B cell (primary cell): ENCODE measurements at regions of chr10 and their contacts with region 1.

Region 1: GRCh38 chr10:100046021-100046486 is 35.6 kb downstream of the CPN1 start:
- DNase-seq: peak; percentile 83
- ATAC-seq: peak; percentile 70
- H3K4me3 ChIP-seq: no peak overlapping the region
- H3K4me3 Mint-ChIP-seq: no peak overlapping the region
- H3K27ac ChIP-seq: no peak overlapping the region
- H3K27ac Mint-ChIP-seq: no peak overlapping the region
- H3K4me1 ChIP-seq: peaks cover 0 to 4% of the 10 kb centered on the region in 2 donors
- H3K4me1 Mint-ChIP-seq: peaks cover 4% of the 10 kb centered on the region
- H3K27me3 ChIP-seq: no peaks in the 10 kb centered on the region
- H3K27me3 Mint-ChIP-seq: no peaks in the 10 kb centered on the region
- CTCF ChIP-seq: peak; percentile 97

Region 2: DNA sequence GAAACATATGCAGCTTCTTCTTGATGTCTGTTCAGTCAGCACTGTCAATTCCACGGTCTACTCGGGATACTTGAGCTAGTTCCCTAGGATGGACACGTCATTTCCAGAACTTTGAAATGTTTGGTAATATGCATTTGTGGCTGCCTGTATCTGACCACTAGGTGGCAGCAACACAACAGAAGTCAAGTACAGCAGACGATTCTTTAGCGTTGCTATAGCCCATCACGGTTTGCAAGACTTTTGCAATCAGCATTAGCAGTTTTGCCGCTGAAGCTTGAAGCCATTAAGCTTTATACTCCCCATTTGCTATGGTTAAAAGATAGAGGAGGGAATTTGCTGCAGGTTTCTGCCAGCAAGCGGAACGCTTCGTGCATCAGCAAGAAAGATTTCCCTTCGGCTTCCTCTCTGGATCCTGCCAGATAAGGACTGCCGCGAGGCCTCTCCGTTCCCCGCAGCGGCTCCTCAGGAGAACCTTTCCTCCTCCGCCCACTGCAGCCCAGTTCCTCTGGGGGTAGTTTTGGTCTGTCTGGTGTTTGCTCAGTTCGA is 200.1 kb before region 1 on chr10:
- CTCF ChIA-PET with region 1: interaction called, 525 read pairs
- POLR2A ChIA-PET with region 1: no interaction called
- intact Hi-C with region 1: no loop called
- DNase-seq: peak; percentile 85
- ATAC-seq: peak; percentile 84
- H3K4me3 ChIP-seq: peak overlapping the region in 4 of 5 experiments; percentile 10 to 61 (median 41)
- H3K4me3 Mint-ChIP-seq: peak overlapping the region; percentile 75
- H3K27ac ChIP-seq: no peak overlapping the region
- H3K27ac Mint-ChIP-seq: no peak overlapping the region
- H3K4me1 ChIP-seq: peaks cover 0 to 10% of the 10 kb centered on the region in 2 donors
- H3K4me1 Mint-ChIP-seq: peaks cover 7% of the 10 kb centered on the region
- H3K27me3 ChIP-seq: peaks cover 0 to 7% (median 0%) of the 10 kb centered on the region in 4 experiments
- H3K27me3 Mint-ChIP-seq: no peaks in the 10 kb centered on the region
- CTCF ChIP-seq: peak; percentile 93

Region 3: GRCh38 chr10:99854860-99855259 is 191.2 kb before region 1 on chr10:
- CTCF ChIA-PET with region 1: interaction called, 525 read pairs
- POLR2A ChIA-PET with region 1: no interaction called
- intact Hi-C with region 1: no loop called
- DNase-seq: no peak
- ATAC-seq: no peak
- H3K4me3 ChIP-seq: no peak overlapping the region
- H3K4me3 Mint-ChIP-seq: no peak overlapping the region
- H3K27ac ChIP-seq: no peak overlapping the region
- H3K27ac Mint-ChIP-seq: no peak overlapping the region
- H3K4me1 ChIP-seq: no peaks in the 10 kb centered on the region
- H3K4me1 Mint-ChIP-seq: no peaks in the 10 kb centered on the region
- H3K27me3 ChIP-seq: no peaks in the 10 kb centered on the region
- H3K27me3 Mint-ChIP-seq: no peaks in the 10 kb centered on the region
- CTCF ChIP-seq: no peak

Region 4: DNA sequence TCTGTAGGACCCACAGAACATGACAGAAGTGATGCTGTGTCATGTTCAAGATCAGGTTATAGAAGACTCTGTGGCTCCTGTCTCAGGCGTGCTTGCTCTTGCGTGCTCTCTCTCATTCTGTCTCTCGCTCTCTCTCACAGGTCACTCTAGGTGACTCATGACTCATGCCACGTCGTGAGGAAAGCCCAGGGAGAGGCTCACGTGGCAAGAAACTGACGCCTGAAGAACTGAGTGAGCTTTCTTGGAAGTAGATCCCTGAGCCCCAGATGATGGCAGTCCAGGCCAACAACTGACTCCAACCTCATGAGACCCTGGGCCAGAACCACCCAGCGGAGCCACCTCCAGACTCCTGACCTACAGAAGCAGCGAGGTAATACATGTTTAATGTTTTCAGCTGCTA is 139.6 kb before region 1 on chr10:
- CTCF ChIA-PET with region 1: interaction called, 15 read pairs
- POLR2A ChIA-PET with region 1: no interaction called
- intact Hi-C with region 1: no loop called
- DNase-seq: no peak
- ATAC-seq: no peak
- H3K4me3 ChIP-seq: no peak overlapping the region
- H3K4me3 Mint-ChIP-seq: no peak overlapping the region
- H3K27ac ChIP-seq: no peak overlapping the region
- H3K27ac Mint-ChIP-seq: no peak overlapping the region
- H3K4me1 ChIP-seq: no peaks in the 10 kb centered on the region
- H3K4me1 Mint-ChIP-seq: no peaks in the 10 kb centered on the region
- H3K27me3 ChIP-seq: no peaks in the 10 kb centered on the region
- H3K27me3 Mint-ChIP-seq: no peaks in the 10 kb centered on the region
- CTCF ChIP-seq: no peak

Region 5: DNA sequence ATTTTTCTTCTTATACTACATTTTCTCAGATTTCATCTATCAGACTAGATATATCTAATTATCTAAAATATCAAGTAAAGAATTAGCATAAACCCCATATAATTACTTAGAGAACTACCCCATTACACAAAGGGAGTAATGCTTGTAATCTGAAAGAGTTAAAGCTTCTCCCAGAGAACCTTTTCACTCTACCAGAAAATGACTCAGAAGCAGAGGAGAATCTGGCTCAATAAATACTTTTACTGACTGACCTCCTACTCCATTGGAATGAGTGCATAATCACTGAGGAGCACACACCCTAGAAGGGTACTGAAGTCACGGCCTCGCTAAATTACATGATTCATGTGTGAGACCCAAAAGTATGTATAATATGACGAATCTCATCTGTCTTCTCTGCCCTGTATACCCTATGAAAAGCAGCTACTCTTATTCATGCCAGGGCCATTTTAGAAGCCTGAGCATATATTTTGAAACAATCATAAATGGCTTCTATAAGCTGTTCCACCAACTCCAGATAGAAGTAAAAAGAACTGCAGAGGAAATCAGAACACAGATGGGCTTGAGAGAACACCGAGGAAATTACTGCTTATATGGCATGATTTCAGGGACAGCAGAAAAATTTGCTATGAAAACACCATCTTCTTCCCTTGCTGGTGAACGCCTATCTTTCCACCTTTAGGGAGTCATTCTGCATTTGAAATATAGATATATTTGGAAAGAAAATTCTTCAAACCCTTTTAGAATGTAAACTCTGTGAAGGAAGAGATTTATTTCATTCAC is 69.0 kb before region 1 on chr10:
- CTCF ChIA-PET with region 1: interaction called, 29 read pairs
- POLR2A ChIA-PET with region 1: interaction called, 5 read pairs
- intact Hi-C with region 1: loop called (anchors 2 kb)
- DNase-seq: no peak
- ATAC-seq: no peak
- H3K4me3 ChIP-seq: no peak overlapping the region
- H3K4me3 Mint-ChIP-seq: no peak overlapping the region
- H3K27ac ChIP-seq: peak overlapping the region in 1 of 2 donors; percentile 26
- H3K27ac Mint-ChIP-seq: no peak overlapping the region
- H3K4me1 ChIP-seq: peaks cover 60 to 65% of the 10 kb centered on the region in 2 donors
- H3K4me1 Mint-ChIP-seq: peaks cover 66% of the 10 kb centered on the region
- H3K27me3 ChIP-seq: no peaks in the 10 kb centered on the region
- H3K27me3 Mint-ChIP-seq: no peaks in the 10 kb centered on the region
- CTCF ChIP-seq: no peak

Region 6: DNA sequence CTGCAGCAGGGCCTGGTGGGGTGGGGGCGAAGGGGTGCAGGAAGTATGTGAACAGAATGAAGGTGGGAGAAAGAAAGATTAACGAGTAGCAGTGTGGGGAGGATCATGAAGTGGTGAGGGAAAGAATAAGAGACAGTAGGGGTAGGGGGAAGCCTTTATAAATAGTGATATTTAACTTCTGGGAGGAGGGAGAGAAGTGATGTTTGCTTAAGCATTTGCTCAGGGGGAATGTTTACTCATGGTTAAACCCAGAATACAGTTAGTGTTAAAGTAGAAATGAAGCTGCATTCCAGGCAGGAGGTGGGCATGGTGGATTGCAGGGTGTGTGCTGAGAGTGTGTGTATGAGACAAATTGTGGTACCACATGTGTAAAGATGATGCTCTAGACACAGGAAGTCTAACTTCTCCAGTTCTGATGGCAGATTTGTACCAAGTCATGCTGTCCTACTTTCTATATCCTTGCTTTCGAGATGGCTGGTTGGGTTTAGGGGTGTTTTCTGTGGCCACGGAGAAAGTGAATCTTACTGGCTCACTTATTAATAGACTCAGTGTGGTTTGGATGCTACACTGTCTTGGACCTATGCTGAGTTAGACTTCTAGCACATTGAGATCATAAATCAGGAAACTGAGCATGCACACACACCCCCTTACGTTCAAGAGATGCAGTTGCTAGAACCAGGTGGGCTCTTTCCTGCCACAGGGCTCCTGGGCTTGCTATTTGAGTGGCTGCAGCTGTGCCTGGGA is 25.7 kb before region 1 on chr10:
- CTCF ChIA-PET with region 1: interaction called, 25 read pairs
- POLR2A ChIA-PET with region 1: no interaction called
- intact Hi-C with region 1: no loop called
- DNase-seq: peak; percentile 49
- ATAC-seq: peak; percentile 66
- H3K4me3 ChIP-seq: no peak overlapping the region
- H3K4me3 Mint-ChIP-seq: peak overlapping the region; percentile 17
- H3K27ac ChIP-seq: no peak overlapping the region
- H3K27ac Mint-ChIP-seq: peak overlapping the region; percentile 64
- H3K4me1 ChIP-seq: peaks cover 12 to 15% of the 10 kb centered on the region in 2 donors
- H3K4me1 Mint-ChIP-seq: peaks cover 19% of the 10 kb centered on the region
- H3K27me3 ChIP-seq: no peaks in the 10 kb centered on the region
- H3K27me3 Mint-ChIP-seq: no peaks in the 10 kb centered on the region
- CTCF ChIP-seq: no peak

Region 7: GRCh38 chr10:100033766-100034418 is 12.2 kb before region 1 on chr10:
- CTCF ChIA-PET with region 1: interaction called, 17 read pairs
- POLR2A ChIA-PET with region 1: no interaction called
- intact Hi-C with region 1: no loop called
- DNase-seq: no peak
- ATAC-seq: no peak
- H3K4me3 ChIP-seq: no peak overlapping the region
- H3K4me3 Mint-ChIP-seq: no peak overlapping the region
- H3K27ac ChIP-seq: no peak overlapping the region
- H3K27ac Mint-ChIP-seq: no peak overlapping the region
- H3K4me1 ChIP-seq: peaks cover 0 to 4% of the 10 kb centered on the region in 2 donors
- H3K4me1 Mint-ChIP-seq: peaks cover 2% of the 10 kb centered on the region
- H3K27me3 ChIP-seq: no peaks in the 10 kb centered on the region
- H3K27me3 Mint-ChIP-seq: peaks cover 15% of the 10 kb centered on the region
- CTCF ChIP-seq: no peak